Activated naive CD4-positive, alpha-beta T cell treated with anti-CD3 and anti-CD28 coated beads for 36 hours (primary cell): ENCODE measurements at regions of chr19 and their contacts with region 1.

Region 1: DNA sequence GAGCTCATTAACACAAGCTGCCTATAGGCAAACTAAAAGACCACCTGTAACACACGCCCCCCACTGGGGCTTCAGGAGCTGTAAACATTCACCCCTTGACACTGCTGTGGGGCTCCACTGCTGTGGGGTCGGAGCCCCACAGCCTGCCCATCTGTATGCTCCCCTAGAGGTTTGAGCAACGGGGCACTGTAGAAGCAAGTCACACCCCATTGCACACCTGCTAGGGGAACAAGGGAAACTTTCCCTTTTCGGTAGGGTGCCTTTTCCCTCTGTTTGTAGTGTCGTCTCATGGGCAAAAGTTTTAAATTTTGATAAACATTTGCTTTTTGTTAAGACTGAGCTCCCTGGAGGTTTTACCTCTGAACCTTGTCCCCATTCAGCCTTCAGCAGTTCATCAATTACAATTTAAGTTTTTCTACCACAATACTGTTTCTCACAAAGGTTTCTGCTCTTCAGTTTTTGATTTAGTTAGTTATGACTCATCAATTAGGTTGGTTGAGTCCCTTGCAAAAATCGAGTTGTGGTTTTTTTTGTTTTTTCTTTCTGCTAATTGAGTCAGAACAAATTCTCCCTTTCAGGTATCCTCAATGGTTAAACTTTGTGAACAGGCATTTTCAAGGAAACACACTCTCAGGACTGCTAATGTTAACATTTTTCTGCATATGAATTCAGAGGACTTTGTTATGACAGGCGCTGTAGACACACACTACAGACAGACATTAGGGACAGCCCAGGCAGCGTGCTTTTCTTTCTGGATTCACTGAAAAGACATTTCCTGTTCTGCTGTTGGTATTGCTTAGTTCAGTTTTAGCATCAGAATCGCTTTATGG is 35.1 kb downstream of the ZNF433 start:
- DNase-seq: peak; percentile 70
- H3K4me3 Mint-ChIP-seq: no peak overlapping the region
- H3K27ac Mint-ChIP-seq: peak overlapping the region; percentile 78
- H3K4me1 Mint-ChIP-seq: peaks cover 19% of the 10 kb centered on the region
- H3K27me3 Mint-ChIP-seq: no peaks in the 10 kb centered on the region

Region 2: DNA sequence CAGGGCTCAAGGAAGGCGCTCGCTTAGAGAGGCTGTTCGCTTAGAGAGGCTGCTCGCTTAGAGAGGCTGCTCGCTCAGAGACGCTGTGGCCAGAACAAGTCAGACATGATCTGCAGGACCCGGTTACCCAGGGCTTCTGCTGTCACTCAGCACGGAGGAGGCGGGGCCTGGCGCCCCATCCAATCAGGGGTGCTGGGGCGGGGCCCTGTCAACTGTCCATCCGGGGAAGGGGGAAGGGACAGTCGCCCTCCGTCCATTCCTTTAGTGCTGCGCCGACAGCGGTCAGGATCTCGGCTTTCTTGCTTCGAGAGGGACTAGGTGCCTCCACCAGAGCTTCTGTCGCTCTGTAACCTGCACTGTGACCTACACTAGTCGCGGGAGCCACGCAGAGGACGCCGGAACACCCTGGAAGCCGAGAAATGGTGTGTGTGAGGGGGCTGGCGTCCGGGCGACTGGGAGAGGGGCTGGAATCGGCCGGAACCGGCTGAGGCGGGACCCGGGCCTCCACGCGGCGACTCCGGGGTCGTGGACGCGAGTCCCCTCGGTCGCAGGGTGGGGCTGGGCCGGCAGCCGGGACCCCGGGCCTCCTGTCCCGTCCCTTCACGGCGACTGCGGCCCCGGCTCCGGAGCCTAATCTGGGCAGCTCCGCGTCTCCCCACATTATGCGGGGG is 186.2 kb before region 1 on chr19 and contains the start of gene ZNF440:
- CTCF ChIA-PET with region 1: no interaction called
- intact Hi-C with region 1: no loop called
- DNase-seq: peak; percentile 93
- H3K4me3 Mint-ChIP-seq: peak within 1 kb of the TSS; percentile 88
- H3K27ac Mint-ChIP-seq: peak within 1 kb of the TSS; percentile 66
- H3K4me1 Mint-ChIP-seq: peaks cover 21% of the 10 kb centered on the region
- H3K27me3 Mint-ChIP-seq: no peaks in the 10 kb centered on the region
- total RNA-seq, gene ZNF440: 3.6 to 4.8 TPM

Region 3: DNA sequence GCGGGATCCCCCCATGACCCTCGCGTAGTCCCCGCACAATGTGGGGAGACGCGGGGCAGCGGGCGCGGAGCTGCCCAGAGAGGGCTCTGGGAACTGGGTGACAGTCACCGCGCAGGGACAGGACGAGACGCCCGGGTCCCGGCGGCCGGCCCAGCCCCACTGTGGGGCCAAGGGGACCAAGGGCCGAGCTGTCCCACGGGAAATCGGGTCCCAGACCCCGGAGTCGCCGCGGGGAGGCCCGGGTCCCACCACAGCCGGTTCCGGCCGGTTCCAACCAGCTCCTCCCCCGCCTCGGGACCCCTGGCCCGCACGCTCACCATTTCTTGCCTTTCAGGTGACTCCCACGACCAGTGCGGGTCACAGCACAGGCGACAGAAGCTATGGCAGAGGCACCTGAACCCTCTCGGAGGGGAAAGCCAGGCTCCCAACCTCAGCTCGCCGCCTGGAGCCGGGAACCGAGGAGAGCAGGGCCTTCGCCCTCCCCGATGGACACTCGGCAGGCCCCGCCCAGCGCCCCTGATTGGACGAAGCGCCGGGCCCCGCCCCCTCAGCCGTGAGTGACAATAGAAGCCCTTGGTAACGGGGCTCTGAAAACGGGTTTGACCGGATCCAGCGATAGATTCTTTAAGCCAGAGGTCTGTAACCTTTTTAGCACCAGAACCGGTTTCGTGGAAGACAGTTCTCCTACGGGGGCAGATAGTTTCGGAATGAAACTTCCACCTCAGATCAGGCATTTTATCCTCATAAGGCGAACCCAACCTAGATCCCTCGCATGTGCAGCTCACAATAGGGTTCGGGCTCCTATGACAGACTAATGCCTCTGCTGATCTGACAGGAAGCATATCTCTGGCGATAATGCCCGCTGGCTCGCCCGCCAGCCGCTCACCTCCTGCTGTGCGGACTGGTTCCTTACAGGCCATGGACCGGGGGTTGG is 35.1 kb after region 1 on chr19 and contains the start of gene ZNF433:
- CTCF ChIA-PET with region 1: interaction called, 6 read pairs
- intact Hi-C with region 1: loop called (anchors 2 kb)
- DNase-seq: peak; percentile 69
- H3K4me3 Mint-ChIP-seq: peak within 1 kb of the TSS; percentile 72
- H3K27ac Mint-ChIP-seq: peak within 1 kb of the TSS; percentile 75
- H3K4me1 Mint-ChIP-seq: peaks cover 10% of the 10 kb centered on the region
- H3K27me3 Mint-ChIP-seq: peaks cover 12% of the 10 kb centered on the region
- total RNA-seq, gene ZNF433: 0.52 TPM

Region 4: DNA sequence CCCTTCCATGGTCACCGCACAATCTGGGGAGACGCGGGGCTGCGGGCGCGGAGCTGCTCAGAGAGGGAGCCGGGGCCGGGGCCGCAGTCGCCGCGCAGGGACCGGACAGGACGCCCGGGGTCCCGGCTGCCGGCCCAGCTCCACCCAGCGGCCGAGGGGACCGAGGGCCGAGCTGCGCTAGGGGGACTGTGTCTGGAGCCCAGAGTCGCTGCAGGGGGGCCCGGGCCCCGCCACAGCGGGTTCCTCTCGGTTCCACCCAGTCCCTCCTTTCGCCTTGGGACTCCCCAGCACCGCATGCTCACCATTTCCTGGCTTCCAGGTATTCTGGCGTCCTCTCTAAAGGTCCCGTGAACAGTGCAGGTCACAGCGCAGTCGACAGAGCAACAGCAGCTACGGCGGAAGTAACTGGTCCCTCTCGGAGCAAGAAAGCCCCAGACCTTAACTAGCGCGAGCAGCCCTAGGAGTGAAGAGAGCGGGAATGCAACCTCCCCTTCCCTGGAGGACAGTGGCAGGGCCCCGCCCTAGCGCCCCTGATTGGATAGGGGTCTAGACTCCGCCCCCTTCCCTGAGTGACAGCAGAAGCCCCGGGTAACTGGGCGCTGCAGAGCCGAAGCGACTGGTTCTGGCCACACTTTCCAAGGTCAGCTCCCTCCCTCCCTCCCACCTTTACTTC is 52.3 kb after region 1 on chr19 and contains the start of gene ZNF878:
- CTCF ChIA-PET with region 1: interaction called, 3 read pairs
- intact Hi-C with region 1: loop called (anchors 1 kb)
- DNase-seq: peak; percentile 80
- H3K4me3 Mint-ChIP-seq: peak within 1 kb of the TSS; percentile 80
- H3K27ac Mint-ChIP-seq: no peak within 1 kb of the TSS
- H3K4me1 Mint-ChIP-seq: peaks cover 9% of the 10 kb centered on the region
- H3K27me3 Mint-ChIP-seq: peaks cover 19% of the 10 kb centered on the region
- total RNA-seq, gene ZNF878: 0.38 to 0.49 TPM

Region 5: DNA sequence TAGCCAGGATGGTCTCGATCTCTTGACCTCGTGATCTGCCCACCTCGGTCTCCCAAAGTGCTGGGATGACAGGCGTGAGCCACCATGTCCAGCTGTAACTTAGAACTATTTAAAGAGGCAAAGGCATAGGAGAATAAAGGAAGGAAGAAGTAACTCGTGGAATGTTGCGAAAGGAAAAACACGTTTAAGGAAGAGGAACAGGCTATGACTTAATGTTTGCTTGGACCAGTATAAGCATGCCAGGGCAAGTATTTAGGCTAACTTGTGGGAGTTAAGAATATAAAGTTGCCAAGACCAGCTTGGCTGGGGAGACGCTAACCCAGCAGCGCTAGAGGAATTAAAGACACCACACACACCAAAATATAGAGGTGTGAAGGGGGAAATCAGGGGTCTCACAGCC is 97.7 kb after region 1 on chr19:
- CTCF ChIA-PET with region 1: no interaction called
- intact Hi-C with region 1: no loop called
- DNase-seq: no peak
- H3K4me3 Mint-ChIP-seq: no peak overlapping the region
- H3K27ac Mint-ChIP-seq: no peak overlapping the region
- H3K4me1 Mint-ChIP-seq: peaks cover 2% of the 10 kb centered on the region
- H3K27me3 Mint-ChIP-seq: peaks cover 9% of the 10 kb centered on the region

Region 6: DNA sequence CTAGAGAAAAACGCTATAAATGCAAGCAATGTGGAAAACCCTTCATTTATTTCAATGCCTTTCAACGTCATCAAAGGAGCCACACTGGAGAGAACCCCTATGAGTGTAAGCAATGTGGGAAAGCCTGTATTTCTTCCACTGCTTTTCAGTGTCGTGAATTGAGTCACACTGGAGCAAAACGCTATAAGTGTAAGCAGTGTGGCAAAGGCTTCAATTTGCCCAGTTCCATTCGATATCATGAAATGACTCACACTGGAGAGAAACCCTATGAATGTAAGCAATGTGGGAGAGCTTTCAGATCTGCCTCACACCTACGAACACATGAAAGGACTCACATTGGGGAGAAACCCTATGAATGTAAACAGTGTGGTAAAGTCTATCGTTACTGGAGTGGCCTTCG is 112.3 kb after region 1 on chr19:
- CTCF ChIA-PET with region 1: no interaction called
- intact Hi-C with region 1: loop called (anchors 5 kb)
- DNase-seq: peak; percentile 37
- H3K4me3 Mint-ChIP-seq: no peak overlapping the region
- H3K27ac Mint-ChIP-seq: no peak overlapping the region
- H3K4me1 Mint-ChIP-seq: peaks cover 15% of the 10 kb centered on the region
- H3K27me3 Mint-ChIP-seq: no peaks in the 10 kb centered on the region

Region 7: GRCh38 chr19:12994701-12995595 is 994.6 kb after region 1 on chr19 and contains the start of gene NFIX:
- CTCF ChIA-PET with region 1: no interaction called
- intact Hi-C with region 1: no loop called
- DNase-seq: peak; percentile 70
- H3K4me3 Mint-ChIP-seq: peak within 1 kb of the TSS; percentile 86
- H3K27ac Mint-ChIP-seq: no peak within 1 kb of the TSS
- H3K4me1 Mint-ChIP-seq: peaks cover 9% of the 10 kb centered on the region
- H3K27me3 Mint-ChIP-seq: no peaks in the 10 kb centered on the region
- total RNA-seq, gene NFIX: 6.2 to 6.4 TPM